IMR-90 (cell line): ENCODE measurements at regions of chr22 and their contacts with region 1.

Region 1: DNA sequence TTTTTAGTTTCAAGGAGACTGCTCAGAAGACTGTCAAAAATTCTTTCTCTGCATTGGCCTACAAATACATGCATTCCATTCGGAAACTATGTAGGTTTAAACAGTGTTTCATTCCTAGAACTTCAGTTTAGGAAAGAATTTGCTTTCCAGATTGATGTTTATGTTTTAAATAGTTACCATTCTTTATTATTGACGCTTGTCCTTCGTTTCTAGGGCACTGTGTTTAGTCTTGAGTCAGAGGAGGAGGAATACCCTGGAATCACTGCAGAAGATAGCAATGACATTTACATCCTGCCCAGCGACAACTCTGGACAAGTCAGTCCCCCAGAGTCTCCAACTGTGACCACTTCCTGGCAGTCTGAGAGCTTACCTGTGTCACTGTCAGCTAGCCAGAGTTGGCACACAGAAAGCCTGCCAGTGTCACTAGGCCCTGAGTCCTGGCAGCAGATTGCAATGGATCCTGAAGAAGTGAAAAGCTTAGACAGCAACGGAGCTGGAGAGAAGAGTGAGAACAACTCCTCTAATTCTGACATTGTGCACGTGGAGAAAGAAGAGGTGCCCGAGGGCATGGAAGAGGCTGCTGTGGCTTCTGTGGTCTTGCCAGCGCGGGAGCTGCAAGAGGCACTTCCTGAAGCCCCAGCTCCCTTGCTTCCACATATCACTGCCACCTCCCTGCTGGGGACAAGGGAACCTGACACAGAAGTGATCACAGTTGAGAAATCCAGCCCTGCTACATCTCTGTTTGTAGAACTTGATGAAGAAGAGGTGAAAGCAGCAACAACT is 47.6 kb downstream of the BID start:
- DNase-seq: peak; percentile 72
- ATAC-seq: peak; percentile 86
- H3K4me3 ChIP-seq: no peak overlapping the region
- H3K27ac ChIP-seq: peak overlapping the region; percentile 95
- H3K4me1 ChIP-seq: peaks cover 29% of the 10 kb centered on the region
- H3K27me3 ChIP-seq: no peaks in the 10 kb centered on the region
- CTCF ChIP-seq: no peak
- POLR2A ChIP-seq: no peak
- RAD21 ChIP-seq: no peak; the same call in 1 of the 2 replicates

Region 2: GRCh38 chr22:17562906-17563870 is 163.5 kb before region 1 on chr22 and contains the start of gene SLC25A18:
- CTCF ChIA-PET with region 1: interaction called, 8 read pairs
- POLR2A ChIA-PET with region 1: no interaction called
- dilution Hi-C with region 1: no loop called
- in situ Hi-C with region 1: loop called (anchors 10 kb)
- intact Hi-C with region 1: no loop called
- DNase-seq: no peak
- ATAC-seq: no peak
- H3K4me3 ChIP-seq: no peak within 1 kb of the TSS
- H3K27ac ChIP-seq: no peak within 1 kb of the TSS
- H3K4me1 ChIP-seq: no peaks in the 10 kb centered on the region
- H3K27me3 ChIP-seq: peaks cover 5% of the 10 kb centered on the region
- CTCF ChIP-seq: no peak
- POLR2A ChIP-seq: no peak
- RAD21 ChIP-seq: no peak
- total RNA-seq, gene SLC25A18: under 0.01 TPM in 1 of 2 replicates, not detected in the other

Region 3: GRCh38 chr22:17665854-17666253 is 60.8 kb before region 1 on chr22:
- CTCF ChIA-PET with region 1: no interaction called
- POLR2A ChIA-PET with region 1: no interaction called
- dilution Hi-C with region 1: no loop called
- in situ Hi-C with region 1: no loop called
- intact Hi-C with region 1: no loop called
- DNase-seq: peak; percentile 25
- ATAC-seq: no peak
- H3K4me3 ChIP-seq: no peak overlapping the region
- H3K27ac ChIP-seq: no peak overlapping the region
- H3K4me1 ChIP-seq: no peaks in the 10 kb centered on the region
- H3K27me3 ChIP-seq: no peaks in the 10 kb centered on the region
- CTCF ChIP-seq: no peak
- POLR2A ChIP-seq: no peak
- RAD21 ChIP-seq: no peak